Ascending aorta (tissue), 2 donors: ENCODE measurements at regions of chr17 and their contacts with region 1.

Region 1: GRCh38 chr17:385926-386876 is 33.6 kb upstream of the RPH3AL start:
- DNase-seq: peak in 1 of 2 donors; percentile 80
- H3K4me3 ChIP-seq: peak overlapping the region; percentile 60 to 76
- H3K27ac ChIP-seq: peak overlapping the region in 1 of 2 donors; percentile 27
- H3K4me1 ChIP-seq: peaks cover 8% of the 10 kb centered on the region in 2 donors
- H3K27me3 ChIP-seq: no peaks in the 10 kb centered on the region
- CTCF ChIP-seq: peak in 2 of 3 experiments; percentile 58 to 76

Region 2: DNA sequence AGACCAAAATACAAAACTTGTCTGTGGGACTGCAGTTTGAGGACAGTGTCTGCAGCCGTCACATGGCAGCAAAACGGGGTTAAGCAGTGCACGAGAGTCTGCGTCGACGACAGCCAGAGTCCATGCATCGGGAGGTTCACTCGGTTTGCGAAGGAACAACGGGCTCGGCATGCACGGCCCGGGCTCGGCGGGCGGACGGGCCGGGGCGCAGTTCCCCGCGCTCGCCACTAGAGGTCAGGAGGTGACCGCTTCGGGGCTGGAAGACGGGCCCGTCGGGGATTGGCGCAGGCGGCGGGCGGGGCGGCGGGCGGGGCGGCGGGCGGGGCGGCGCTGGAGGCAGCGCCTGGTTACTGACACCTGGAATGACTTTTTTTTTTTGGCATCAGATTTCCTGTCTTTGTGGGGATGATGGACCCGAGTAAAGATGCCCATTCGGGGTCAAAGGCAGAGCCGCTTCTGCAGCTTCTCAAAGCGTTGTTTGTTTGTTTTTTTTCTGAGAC is 242.4 kb before region 1 on chr17:
- intact Hi-C with region 1: loop called (anchors 5 kb)
- DNase-seq: peak in 1 of 2 donors; percentile 82
- H3K4me3 ChIP-seq: no peak overlapping the region
- H3K27ac ChIP-seq: no peak overlapping the region
- H3K4me1 ChIP-seq: no peaks in the 10 kb centered on the region
- H3K27me3 ChIP-seq: no peaks in the 10 kb centered on the region
- CTCF ChIP-seq: peak; percentile 84 to 90 (median 84)

Region 3: GRCh38 chr17:364308-364707 is 21.9 kb before region 1 on chr17:
- intact Hi-C with region 1: no loop called
- DNase-seq: peak in 1 of 2 donors; percentile 60
- H3K4me3 ChIP-seq: no peak overlapping the region
- H3K27ac ChIP-seq: no peak overlapping the region
- H3K4me1 ChIP-seq: no peaks in the 10 kb centered on the region
- H3K27me3 ChIP-seq: no peaks in the 10 kb centered on the region
- CTCF ChIP-seq: no peak

Region 4: GRCh38 chr17:404703-405102 is 18.5 kb after region 1 on chr17:
- intact Hi-C with region 1: no loop called
- DNase-seq: no peak
- H3K4me3 ChIP-seq: no peak overlapping the region
- H3K27ac ChIP-seq: no peak overlapping the region
- H3K4me1 ChIP-seq: no peaks in the 10 kb centered on the region
- H3K27me3 ChIP-seq: no peaks in the 10 kb centered on the region
- CTCF ChIP-seq: no peak

Region 5: GRCh38 chr17:427327-427726 is 41.1 kb after region 1 on chr17:
- intact Hi-C with region 1: no loop called
- DNase-seq: no peak
- H3K4me3 ChIP-seq: no peak overlapping the region
- H3K27ac ChIP-seq: no peak overlapping the region
- H3K4me1 ChIP-seq: no peaks in the 10 kb centered on the region
- H3K27me3 ChIP-seq: no peaks in the 10 kb centered on the region
- CTCF ChIP-seq: no peak

Region 6: GRCh38 chr17:491086-492021 is 105.2 kb after region 1 on chr17:
- intact Hi-C with region 1: no loop called
- DNase-seq: peak in 1 of 2 donors; percentile 77
- H3K4me3 ChIP-seq: peak overlapping the region; percentile 41 to 66
- H3K27ac ChIP-seq: peak overlapping the region; percentile 35 to 63
- H3K4me1 ChIP-seq: peaks cover 8 to 14% of the 10 kb centered on the region in 2 donors
- H3K27me3 ChIP-seq: no peaks in the 10 kb centered on the region
- CTCF ChIP-seq: peak in 1 of 3 experiments; percentile 13